IMR-90 (cell line): ENCODE measurements at regions of chr3 and their contacts with region 1.

Region 1: GRCh38 chr3:149086232-149086988 is at the start of gene HLTF:
- DNase-seq: peak; percentile 98
- ATAC-seq: peak; percentile 100
- H3K4me3 ChIP-seq: peak within 1 kb of the TSS; percentile 79
- H3K27ac ChIP-seq: peak within 1 kb of the TSS; percentile 68
- H3K4me1 ChIP-seq: 0 out of 2 replicates have a peak, but pooled peaks cover 2% of the 10 kb centered on the region
- H3K27me3 ChIP-seq: no peaks in the 10 kb centered on the region
- CTCF ChIP-seq: no peak
- POLR2A ChIP-seq: 0 out of 2 replicates have a peak, but pooled peaks have one; percentile 39
- RAD21 ChIP-seq: no peak
- total RNA-seq, gene HLTF: 39.1 and 48.0 TPM in 2 replicates

Region 2: DNA sequence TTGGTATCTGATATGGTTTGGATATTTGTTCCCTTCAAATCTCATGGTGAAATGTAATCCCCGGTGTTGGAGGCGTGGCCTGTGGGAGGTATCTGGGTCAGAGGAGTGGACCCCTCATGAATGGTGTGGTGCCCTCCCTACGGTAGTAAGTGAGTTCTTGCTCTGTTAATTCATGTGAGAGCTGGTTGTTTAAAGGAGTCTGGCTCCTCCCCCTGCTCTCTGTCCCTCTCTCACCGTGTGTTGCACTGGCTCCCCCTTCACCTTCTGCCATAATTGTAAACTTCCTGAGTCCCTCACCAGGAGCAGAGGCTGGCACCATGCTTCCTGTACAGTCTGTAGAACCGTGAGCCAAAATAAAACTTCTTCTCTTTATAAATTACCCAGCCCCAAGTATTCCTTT is 635.6 kb before region 1 on chr3:
- CTCF ChIA-PET with region 1: no interaction called
- POLR2A ChIA-PET with region 1: no interaction called
- dilution Hi-C with region 1: no loop called
- in situ Hi-C with region 1: no loop called
- intact Hi-C with region 1: no loop called
- DNase-seq: no peak
- ATAC-seq: no peak
- H3K4me3 ChIP-seq: no peak overlapping the region
- H3K27ac ChIP-seq: no peak overlapping the region
- H3K4me1 ChIP-seq: no peaks in the 10 kb centered on the region
- H3K27me3 ChIP-seq: no peaks in the 10 kb centered on the region
- CTCF ChIP-seq: no peak
- POLR2A ChIP-seq: no peak
- RAD21 ChIP-seq: no peak

Region 3: DNA sequence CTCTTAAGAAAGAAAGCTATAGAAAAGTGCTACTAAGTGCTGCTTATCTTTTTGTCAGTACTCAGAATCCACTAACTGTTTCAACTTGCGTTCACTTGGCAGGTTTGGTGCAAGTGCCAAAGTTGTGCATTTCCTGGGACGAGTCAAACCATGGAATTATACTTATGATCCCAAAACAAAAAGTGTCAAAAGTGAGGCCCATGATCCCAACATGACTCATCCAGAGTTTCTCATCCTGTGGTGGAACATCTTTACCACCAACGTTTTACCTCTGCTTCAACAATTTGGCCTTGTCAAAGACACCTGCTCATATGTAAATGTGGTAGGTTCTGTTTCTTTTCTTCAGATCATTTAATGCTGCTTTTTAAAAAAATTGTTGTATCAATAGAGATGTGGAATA is 62.5 kb before region 1 on chr3:
- CTCF ChIA-PET with region 1: no interaction called
- POLR2A ChIA-PET with region 1: interaction called, 13 read pairs
- dilution Hi-C with region 1: no loop called
- in situ Hi-C with region 1: no loop called
- intact Hi-C with region 1: no loop called
- DNase-seq: peak; percentile 36
- ATAC-seq: no peak
- H3K4me3 ChIP-seq: no peak overlapping the region
- H3K27ac ChIP-seq: no peak overlapping the region
- H3K4me1 ChIP-seq: peaks cover 15% of the 10 kb centered on the region
- H3K27me3 ChIP-seq: no peaks in the 10 kb centered on the region
- CTCF ChIP-seq: no peak
- POLR2A ChIP-seq: no peak
- RAD21 ChIP-seq: no peak